CD14-positive monocyte (primary cell): ENCODE measurements at regions of chr20 and their contacts with region 1.

Region 1: GRCh38 chr20:53578492-53579222 is 15.0 kb downstream of the ZNF217 start:
- DNase-seq: peak; percentile 78 to 90 (median 89)
- H3K4me3 ChIP-seq: peak overlapping the region; percentile 12 to 68 (median 26)
- H3K4me3 Mint-ChIP-seq: peak overlapping the region; percentile 55 to 83
- H3K27ac ChIP-seq: peak overlapping the region in 1 of 2 donors; percentile 89
- H3K27ac Mint-ChIP-seq: peak overlapping the region; percentile 90 to 97 (median 95)
- H3K4me1 ChIP-seq: peaks cover 51 to 62% of the 10 kb centered on the region in 2 donors
- H3K4me1 Mint-ChIP-seq: peaks cover 65% of the 10 kb centered on the region
- H3K27me3 ChIP-seq: no peaks in the 10 kb centered on the region
- H3K27me3 Mint-ChIP-seq: peaks cover 0 to 2% (median under 1%) of the 10 kb centered on the region in 3 donors
- CTCF ChIP-seq: peak; percentile 92

Region 2: GRCh38 chr20:53611449-53611894 is 32.8 kb after region 1 on chr20:
- intact Hi-C with region 1: loop called in 1 of 2 experiments (anchors 2 kb)
- DNase-seq: peak in 2 of 3 donors; percentile 85 to 86
- H3K4me3 ChIP-seq: peak overlapping the region in 1 of 3 experiments; percentile 55
- H3K4me3 Mint-ChIP-seq: peak overlapping the region; percentile 10 to 61
- H3K27ac ChIP-seq: peak overlapping the region; percentile 2 to 73
- H3K27ac Mint-ChIP-seq: peak overlapping the region; percentile 63 to 81 (median 77)
- H3K4me1 ChIP-seq: peaks cover 41 to 53% of the 10 kb centered on the region in 2 donors
- H3K4me1 Mint-ChIP-seq: peaks cover 41% of the 10 kb centered on the region
- H3K27me3 ChIP-seq: no peaks in the 10 kb centered on the region
- H3K27me3 Mint-ChIP-seq: no peaks in the 10 kb centered on the region
- CTCF ChIP-seq: no peak

Region 3: DNA sequence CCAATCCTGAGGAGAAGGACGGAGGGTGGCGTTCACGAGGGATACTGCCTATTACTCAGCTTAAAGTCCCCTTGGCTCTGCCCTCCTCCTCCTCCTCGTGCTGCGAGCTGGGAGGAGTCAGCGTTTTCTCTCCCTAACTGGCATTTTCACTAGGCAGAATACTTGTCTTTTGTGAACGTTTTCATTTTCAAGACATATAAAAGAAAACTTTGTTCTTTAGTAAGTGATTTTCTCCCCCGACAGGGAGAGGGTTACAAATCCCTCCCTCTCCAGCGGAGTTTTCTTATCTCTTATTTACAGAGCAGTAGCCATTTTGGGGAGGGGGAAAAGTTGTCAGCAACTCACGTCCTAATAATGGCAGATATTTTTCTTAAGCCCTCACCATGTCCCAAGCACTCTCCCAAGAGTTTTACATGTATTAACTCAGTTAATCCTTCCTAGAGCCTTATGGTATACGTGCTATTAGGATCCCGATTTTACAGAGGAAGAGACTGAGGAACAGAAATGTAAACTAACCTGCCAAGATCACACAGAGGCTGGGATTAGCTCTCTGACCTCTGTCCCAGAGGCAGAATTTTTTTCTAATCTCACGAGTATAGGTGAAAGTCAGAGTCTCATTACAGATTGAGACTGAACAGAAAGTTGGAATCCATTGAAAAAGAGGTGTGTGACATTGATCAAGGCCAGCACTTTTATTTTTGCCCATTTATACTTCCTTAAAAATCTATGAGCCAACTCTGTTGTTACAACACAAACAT is 45.0 kb after region 1 on chr20:
- intact Hi-C with region 1: loop called in 1 of 2 experiments (anchors 5 kb)
- DNase-seq: peak; percentile 62 to 82 (median 78)
- H3K4me3 ChIP-seq: peak overlapping the region; percentile 36 to 76 (median 76)
- H3K4me3 Mint-ChIP-seq: peak overlapping the region; percentile 75 to 86
- H3K27ac ChIP-seq: peak overlapping the region; percentile 71 to 96
- H3K27ac Mint-ChIP-seq: peak overlapping the region; percentile 88 to 96 (median 93)
- H3K4me1 ChIP-seq: peaks cover 56 to 63% of the 10 kb centered on the region in 2 donors
- H3K4me1 Mint-ChIP-seq: peaks cover 45% of the 10 kb centered on the region
- H3K27me3 ChIP-seq: no peaks in the 10 kb centered on the region
- H3K27me3 Mint-ChIP-seq: no peaks in the 10 kb centered on the region
- CTCF ChIP-seq: no peak

Region 4: GRCh38 chr20:53828682-53829254 is 250.1 kb after region 1 on chr20:
- intact Hi-C with region 1: loop called in 1 of 2 experiments (anchors 10 kb)
- DNase-seq: peak in 1 of 3 donors; percentile 12
- H3K4me3 ChIP-seq: peak overlapping the region; percentile 19 to 70 (median 47)
- H3K4me3 Mint-ChIP-seq: peak overlapping the region; percentile 56 to 88
- H3K27ac ChIP-seq: peak overlapping the region; percentile 32 to 92
- H3K27ac Mint-ChIP-seq: peak overlapping the region; percentile 1 to 94 (median 85)
- H3K4me1 ChIP-seq: peaks cover 40 to 52% of the 10 kb centered on the region in 2 donors
- H3K4me1 Mint-ChIP-seq: peaks cover 52% of the 10 kb centered on the region
- H3K27me3 ChIP-seq: no peaks in the 10 kb centered on the region
- H3K27me3 Mint-ChIP-seq: peaks cover 0 to 3% (median 1%) of the 10 kb centered on the region in 3 donors
- CTCF ChIP-seq: no peak

Region 5: GRCh38 chr20:53915446-53916172 is 337.0 kb after region 1 on chr20:
- intact Hi-C with region 1: loop called in 1 of 2 experiments (anchors 5 kb)
- DNase-seq: peak; percentile 95 to 97 (median 97)
- H3K4me3 ChIP-seq: peak overlapping the region; percentile 51 to 75 (median 68)
- H3K4me3 Mint-ChIP-seq: peak overlapping the region; percentile 92 to 97
- H3K27ac ChIP-seq: peak overlapping the region; percentile 82 to 87
- H3K27ac Mint-ChIP-seq: peak overlapping the region; percentile 94 to 100 (median 98)
- H3K4me1 ChIP-seq: peaks cover 52 to 62% of the 10 kb centered on the region in 2 donors
- H3K4me1 Mint-ChIP-seq: peaks cover 63% of the 10 kb centered on the region
- H3K27me3 ChIP-seq: no peaks in the 10 kb centered on the region
- H3K27me3 Mint-ChIP-seq: peaks cover 0 to 3% (median 1%) of the 10 kb centered on the region in 3 donors
- CTCF ChIP-seq: peak; percentile 84

Region 6: DNA sequence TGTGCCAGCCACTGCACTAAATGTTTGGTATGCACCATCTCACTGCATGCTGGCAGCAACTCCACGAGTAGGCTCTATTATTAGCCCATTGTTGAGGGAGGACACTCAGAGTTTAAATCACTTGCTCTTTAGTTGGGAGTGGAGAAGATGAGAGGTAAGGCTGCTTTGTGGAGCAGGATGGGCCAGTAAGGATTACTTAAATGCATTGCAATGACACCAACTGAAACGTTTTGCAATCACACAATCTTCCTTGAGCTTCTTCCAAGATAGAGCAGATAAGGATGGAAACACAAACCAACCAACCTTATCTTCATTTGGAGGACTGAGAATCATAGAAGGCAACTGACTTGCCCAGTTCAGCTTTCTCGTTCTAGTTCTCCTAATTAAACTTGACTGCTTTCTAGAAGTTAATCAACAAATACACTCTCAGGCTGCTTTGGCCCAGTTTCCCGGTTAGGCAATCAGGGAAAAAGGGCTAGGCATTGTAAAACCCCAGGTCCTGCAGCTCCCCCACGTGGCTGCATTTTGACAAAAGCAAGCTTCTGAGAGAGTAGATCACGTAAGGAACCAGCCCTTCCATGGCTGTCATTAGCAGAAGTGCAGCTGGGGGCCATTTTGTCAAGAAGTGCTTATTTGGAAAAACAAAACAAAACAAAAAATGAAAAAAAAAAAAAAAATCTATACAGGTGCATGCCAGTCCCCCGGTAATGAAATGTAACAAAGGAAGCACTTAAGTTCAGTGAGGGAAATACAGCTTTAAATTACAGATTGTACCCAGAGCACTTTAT is 361.1 kb after region 1 on chr20:
- intact Hi-C with region 1: loop called (anchors 2 to 5 kb)
- DNase-seq: peak; percentile 90 to 96 (median 96)
- H3K4me3 ChIP-seq: peak overlapping the region in 2 of 3 experiments; percentile 8 to 61
- H3K4me3 Mint-ChIP-seq: peak overlapping the region; percentile 60 to 63
- H3K27ac ChIP-seq: peak overlapping the region; percentile 2 to 90
- H3K27ac Mint-ChIP-seq: peak overlapping the region; percentile 80 to 94 (median 91)
- H3K4me1 ChIP-seq: peaks cover 81 to 87% of the 10 kb centered on the region in 2 donors
- H3K4me1 Mint-ChIP-seq: peaks cover 84% of the 10 kb centered on the region
- H3K27me3 ChIP-seq: no peaks in the 10 kb centered on the region
- H3K27me3 Mint-ChIP-seq: peaks cover 0 to 2% (median 2%) of the 10 kb centered on the region in 3 donors
- CTCF ChIP-seq: peak; percentile 86

Region 7: DNA sequence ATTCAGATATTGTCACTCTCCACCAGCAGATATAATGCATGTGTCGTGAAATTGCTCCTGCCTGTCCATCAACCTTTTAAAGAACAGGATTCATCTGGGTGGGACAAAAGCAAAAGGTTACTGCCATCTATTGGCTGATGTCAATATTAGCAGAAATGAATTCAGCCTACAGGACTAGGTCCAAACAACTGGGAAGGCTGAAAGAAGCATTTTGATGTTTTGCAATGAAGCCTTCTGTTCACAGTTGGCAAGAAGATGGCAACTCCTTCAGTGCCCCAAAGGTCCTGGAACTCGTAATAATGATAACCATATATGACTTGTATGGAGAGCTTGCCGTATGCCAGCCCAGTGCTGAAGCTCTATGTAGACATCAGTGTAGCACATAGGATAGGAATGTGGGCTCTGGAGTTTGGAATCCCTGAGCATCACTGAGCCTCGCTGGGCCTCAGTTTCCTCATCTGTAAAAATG is 484.2 kb after region 1 on chr20:
- intact Hi-C with region 1: loop called in 1 of 2 experiments (anchors 10 kb)
- DNase-seq: peak; percentile 5 to 46 (median 31)
- H3K4me3 ChIP-seq: no peak overlapping the region
- H3K4me3 Mint-ChIP-seq: no peak overlapping the region
- H3K27ac ChIP-seq: no peak overlapping the region
- H3K27ac Mint-ChIP-seq: no peak overlapping the region
- H3K4me1 ChIP-seq: no peaks in the 10 kb centered on the region
- H3K4me1 Mint-ChIP-seq: peaks cover 4% of the 10 kb centered on the region
- H3K27me3 ChIP-seq: no peaks in the 10 kb centered on the region
- H3K27me3 Mint-ChIP-seq: peaks cover 0 to 2% (median 1%) of the 10 kb centered on the region in 3 donors
- CTCF ChIP-seq: peak; percentile 73

Region 8: DNA sequence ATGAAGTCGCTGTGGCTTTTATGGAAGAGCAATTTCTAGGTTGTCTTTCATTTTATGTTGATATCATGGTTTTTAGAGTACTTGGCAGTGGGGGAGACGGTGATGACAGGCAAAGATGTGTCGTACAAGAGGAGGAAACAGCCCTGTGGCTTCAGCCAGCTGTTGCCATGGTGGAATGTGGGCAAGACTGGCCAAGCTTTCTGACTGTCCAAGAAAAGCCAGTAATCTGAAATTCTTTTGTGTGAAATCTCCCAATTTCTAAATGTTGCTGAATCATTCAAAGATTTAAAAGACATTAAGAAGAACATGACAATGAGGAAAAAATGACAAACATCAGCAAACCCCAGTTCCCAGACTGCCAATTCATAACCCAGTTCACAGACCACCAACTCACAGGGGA is 652.4 kb after region 1 on chr20:
- intact Hi-C with region 1: no loop called
- DNase-seq: no peak
- H3K4me3 ChIP-seq: no peak overlapping the region
- H3K4me3 Mint-ChIP-seq: no peak overlapping the region
- H3K27ac ChIP-seq: no peak overlapping the region
- H3K27ac Mint-ChIP-seq: no peak overlapping the region
- H3K4me1 ChIP-seq: no peaks in the 10 kb centered on the region
- H3K4me1 Mint-ChIP-seq: peaks cover 3% of the 10 kb centered on the region
- H3K27me3 ChIP-seq: peaks cover 0 to 2% of the 10 kb centered on the region in 2 donors
- H3K27me3 Mint-ChIP-seq: no peaks in the 10 kb centered on the region
- CTCF ChIP-seq: no peak